Common myeloid progenitor, CD34-positive (primary cell): ENCODE measurements at regions of chr1 and their contacts with region 1.

Region 1: DNA sequence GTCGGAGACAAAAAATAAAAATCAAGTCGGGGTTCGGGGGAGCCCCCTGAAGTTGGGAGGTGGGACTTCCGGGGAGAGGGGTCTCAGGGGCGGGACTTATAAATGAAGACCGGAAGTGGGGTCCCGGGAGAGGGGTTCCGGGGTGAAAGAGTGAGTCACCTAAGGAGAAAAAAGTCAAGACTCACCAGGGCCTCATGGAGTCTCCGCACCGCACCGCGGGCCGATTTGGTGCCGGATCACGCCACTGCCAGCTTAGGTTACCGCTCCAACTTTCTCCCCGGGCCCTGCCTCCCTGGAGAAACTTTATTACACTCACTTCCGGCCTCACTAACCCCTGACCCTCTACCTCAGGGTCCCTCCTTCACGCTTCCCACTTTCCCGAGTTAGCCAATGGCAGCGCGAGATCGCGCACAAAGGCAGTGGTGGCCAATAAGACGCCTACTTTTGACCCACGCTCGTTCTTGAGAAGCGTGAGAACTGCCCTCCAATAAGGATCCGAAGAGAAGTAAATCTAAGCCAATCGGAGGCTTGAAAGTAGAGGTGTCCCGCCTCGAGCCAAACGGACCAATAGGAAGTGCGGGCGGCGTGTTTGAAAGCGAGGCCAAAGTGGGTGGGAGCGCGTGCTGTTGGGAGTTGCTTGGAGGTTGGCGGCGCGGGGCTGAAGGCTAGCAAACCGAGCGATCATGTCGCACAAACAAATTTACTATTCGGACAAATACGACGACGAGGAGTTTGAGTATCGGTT is at the start of gene CKS1B:
- DNase-seq: peak; percentile 99 to 100 (median 100)
- H3K4me3 ChIP-seq: peak within 1 kb of the TSS; percentile 64 to 97 (median 89)
- H3K27ac ChIP-seq: peak within 1 kb of the TSS; percentile 95 to 98
- H3K4me1 ChIP-seq: peaks cover 32 to 73% (median 72%) of the 10 kb centered on the region in 4 experiments
- H3K27me3 ChIP-seq: no peaks in the 10 kb centered on the region

Region 2: GRCh38 chr1:154884869-154885701 is 89.2 kb before region 1 on chr1:
- CTCF ChIA-PET with region 1: no interaction called
- POLR2A ChIA-PET with region 1: no interaction called
- DNase-seq: peak; percentile 53 to 92 (median 85)
- H3K4me3 ChIP-seq: no peak overlapping the region
- H3K27ac ChIP-seq: peak overlapping the region in 1 of 2 experiments; percentile 10
- H3K4me1 ChIP-seq: peaks cover 12 to 39% (median 32%) of the 10 kb centered on the region in 4 experiments
- H3K27me3 ChIP-seq: no peaks in the 10 kb centered on the region

Region 3: GRCh38 chr1:154955718-154956543 is 18.3 kb before region 1 on chr1 and contains the start of gene PBXIP1:
- CTCF ChIA-PET with region 1: interaction called, 17 read pairs
- POLR2A ChIA-PET with region 1: interaction called, 6 read pairs
- DNase-seq: peak; percentile 94 to 96 (median 94)
- H3K4me3 ChIP-seq: peak within 1 kb of the TSS; percentile 33 to 92 (median 81)
- H3K27ac ChIP-seq: peak within 1 kb of the TSS; percentile 100
- H3K4me1 ChIP-seq: peaks cover 29 to 74% (median 69%) of the 10 kb centered on the region in 4 experiments
- H3K27me3 ChIP-seq: no peaks in the 10 kb centered on the region

Region 4: GRCh38 chr1:154961497-154962262 is 12.6 kb before region 1 on chr1 and contains the start of gene PYGO2:
- CTCF ChIA-PET with region 1: interaction called, 17 read pairs
- POLR2A ChIA-PET with region 1: interaction called, 6 read pairs
- DNase-seq: peak; percentile 79 to 93 (median 89)
- H3K4me3 ChIP-seq: peak within 1 kb of the TSS; percentile 74 to 97 (median 84)
- H3K27ac ChIP-seq: peak within 1 kb of the TSS; percentile 89 to 97
- H3K4me1 ChIP-seq: peaks cover 14 to 39% (median 35%) of the 10 kb centered on the region in 4 experiments
- H3K27me3 ChIP-seq: no peaks in the 10 kb centered on the region

Region 5: DNA sequence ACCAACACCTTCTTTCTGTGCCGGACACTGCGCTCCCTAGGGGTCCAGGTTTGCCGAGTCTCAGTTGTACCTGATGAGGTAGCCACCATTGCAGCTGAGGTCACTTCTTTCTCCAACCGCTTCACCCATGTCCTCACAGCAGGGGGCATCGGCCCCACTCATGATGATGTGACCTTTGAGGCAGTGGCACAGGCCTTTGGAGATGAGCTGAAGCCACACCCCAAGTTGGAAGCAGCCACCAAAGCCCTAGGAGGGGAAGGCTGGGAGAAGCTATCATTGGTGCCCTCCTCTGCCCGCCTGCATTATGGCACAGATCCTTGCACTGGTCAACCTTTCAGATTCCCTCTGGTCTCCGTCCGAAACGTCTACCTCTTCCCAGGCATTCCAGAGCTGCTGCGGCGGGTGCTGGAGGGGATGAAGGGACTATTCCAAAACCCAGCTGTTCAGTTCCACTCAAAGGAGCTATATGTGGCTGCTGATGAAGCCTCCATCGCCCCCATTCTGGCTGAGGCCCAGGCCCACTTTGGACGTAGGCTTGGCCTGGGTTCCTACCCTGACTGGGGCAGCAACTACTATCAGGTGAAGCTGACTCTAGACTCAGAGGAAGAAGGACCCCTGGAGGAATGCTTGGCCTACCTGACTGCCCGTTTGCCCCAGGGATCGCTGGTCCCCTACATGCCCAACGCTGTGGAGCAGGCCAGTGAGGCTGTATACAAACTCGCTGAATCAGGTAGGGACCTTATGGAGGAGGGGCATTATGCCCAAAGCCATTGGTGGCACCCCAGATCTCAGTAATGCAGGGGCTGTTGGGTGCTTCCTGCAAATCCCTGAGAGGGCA is 14.1 kb after region 1 on chr1:
- CTCF ChIA-PET with region 1: interaction called, 320 read pairs
- POLR2A ChIA-PET with region 1: interaction called, 3 read pairs
- DNase-seq: peak in 1 of 3 donors; percentile 32
- H3K4me3 ChIP-seq: no peak overlapping the region
- H3K27ac ChIP-seq: no peak overlapping the region
- H3K4me1 ChIP-seq: peaks cover 4 to 21% (median 12%) of the 10 kb centered on the region in 4 experiments
- H3K27me3 ChIP-seq: no peaks in the 10 kb centered on the region

Region 6: DNA sequence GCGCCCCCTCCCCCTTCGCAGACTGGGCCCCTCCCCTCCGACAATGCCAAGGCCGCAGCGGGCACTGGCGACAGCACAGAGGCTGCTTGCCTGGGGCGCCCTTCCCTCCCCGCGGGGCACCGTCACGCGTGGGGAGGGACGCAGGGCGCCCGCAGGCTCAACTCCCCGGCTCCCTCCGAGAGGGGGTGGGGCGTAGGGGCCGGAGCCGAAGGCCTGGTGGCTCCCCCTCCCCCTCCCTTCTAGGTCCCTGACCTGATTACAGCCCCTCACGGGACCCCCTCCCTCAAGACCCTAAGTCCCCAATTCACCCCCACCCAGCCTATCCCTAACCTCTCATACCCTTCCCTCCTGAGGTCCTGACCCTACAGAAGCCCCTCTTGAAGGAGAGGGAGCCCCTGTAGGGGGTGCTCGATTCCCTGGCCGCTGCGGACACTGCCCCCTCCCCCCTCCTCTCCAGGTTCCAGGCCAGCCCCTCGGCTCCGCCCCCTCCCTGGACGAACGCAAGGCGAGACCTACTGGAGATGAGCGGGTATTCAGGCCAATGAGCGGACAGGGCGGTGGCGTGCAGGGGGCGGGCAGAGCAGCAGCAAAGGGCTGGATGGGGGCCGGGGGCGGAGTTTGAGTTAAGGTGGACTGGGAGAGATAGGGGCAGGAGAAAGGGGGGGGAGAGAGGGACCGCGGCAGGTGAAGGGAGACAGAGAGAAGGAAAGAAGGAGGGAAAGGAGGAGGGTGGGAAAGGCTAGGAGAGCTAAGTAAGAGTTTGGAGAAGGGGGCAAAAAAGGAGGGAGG is 27.6 kb after region 1 on chr1:
- CTCF ChIA-PET with region 1: interaction called, 320 read pairs
- POLR2A ChIA-PET with region 1: interaction called, 6 read pairs
- DNase-seq: peak; percentile 96 to 98 (median 98)
- H3K4me3 ChIP-seq: peak overlapping the region; percentile 39 to 95 (median 72)
- H3K27ac ChIP-seq: peak overlapping the region in 1 of 2 experiments; percentile 83
- H3K4me1 ChIP-seq: peaks cover 11 to 90% (median 88%) of the 10 kb centered on the region in 4 experiments
- H3K27me3 ChIP-seq: no peaks in the 10 kb centered on the region